ENCODE measurements at regions of chr21 and their contacts with region 1.

Region 1: GRCh38 chr21:15592271-15592860 is 137.4 kb upstream of the USP25 start:
- DNase-seq: no peak

Region 2: DNA sequence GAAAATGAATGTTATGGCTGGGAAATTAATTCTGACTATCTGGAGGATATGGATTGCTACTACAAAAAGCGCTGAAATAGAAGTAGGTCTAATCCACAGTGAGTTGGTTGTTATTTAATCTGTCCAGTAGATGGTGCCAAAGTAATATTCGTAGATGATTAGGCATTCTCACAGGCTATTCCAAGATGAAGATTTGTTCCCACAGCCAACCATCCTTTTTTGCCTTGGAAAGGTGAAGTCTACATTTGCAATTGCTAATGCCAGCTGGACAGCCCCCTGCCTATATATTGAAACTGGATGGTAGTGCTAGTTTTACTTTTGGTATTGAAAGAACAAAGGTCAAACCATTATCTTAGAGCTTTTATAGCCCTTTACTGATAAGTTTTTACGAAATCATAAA is 1332.6 kb before region 1 on chr21:
- intact Hi-C with region 1: loop called (anchors 5 kb)
- DNase-seq: no peak

Region 3: DNA sequence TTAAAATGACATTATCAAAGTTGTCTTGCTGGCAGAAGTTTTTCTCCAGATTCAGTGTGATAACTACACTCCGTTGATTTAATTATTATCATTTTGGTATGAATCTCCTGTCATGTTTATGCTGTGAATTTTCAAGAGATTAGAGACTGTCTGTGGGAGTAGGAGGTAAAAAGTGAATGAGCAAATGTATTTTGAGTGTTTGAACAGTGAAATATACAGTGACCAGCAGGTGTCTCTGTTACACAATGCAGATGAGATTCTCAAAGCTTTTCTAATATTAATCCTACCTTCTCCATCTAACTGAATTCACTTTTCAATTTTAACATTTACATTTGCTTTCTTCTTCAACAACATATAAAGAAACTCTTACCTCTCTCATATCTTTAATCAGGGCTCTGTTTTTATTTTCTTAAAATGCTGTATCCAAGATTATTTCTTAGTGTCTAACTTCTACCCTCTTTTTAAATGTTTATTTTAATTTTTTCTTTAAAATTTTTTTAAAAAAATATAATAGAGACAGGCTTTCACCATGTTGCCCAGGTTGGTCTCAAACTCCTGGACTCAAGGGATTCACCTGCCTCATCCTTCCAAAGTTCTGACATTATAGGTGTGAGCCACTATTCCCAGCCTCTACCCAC is 1188.6 kb before region 1 on chr21:
- intact Hi-C with region 1: loop called (anchors 10 kb)
- DNase-seq: no peak

Region 4: GRCh38 chr21:14864211-14865021 is 728.0 kb before region 1 on chr21:
- intact Hi-C with region 1: loop called (anchors 5 kb)
- DNase-seq: peak; percentile 64 to 96 (median 78)

Region 5: DNA sequence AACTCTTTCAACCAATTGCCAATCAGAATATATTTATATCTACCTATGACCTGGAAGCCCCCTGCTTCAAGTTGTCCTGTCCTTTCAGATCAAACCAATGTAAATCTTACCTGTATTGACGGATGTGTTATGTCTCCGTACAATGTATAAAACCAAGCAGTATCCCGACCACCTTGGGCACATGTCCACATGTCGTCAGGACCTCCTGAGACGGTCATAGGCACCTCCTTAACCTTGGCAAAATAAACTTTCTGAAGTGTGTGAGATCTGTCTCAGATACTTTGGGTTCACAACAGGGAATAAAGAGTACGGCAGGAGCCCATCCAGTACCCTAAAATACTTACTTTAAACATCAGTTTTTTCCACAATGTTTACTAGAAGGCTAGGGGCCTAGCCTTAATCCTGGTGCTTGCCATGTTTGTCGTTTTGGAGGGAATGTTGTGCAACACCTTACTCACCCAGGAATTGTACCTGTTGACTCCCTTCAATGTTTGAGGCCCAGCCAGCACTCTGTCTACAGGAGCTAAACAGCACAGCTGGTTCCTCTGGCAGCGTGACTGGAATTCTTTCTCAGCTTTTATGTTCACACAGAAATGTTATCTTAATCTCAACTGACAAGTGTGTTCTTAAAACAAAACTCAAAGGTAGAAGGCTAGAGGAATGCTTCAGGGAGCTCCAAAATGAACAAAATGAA is 46.6 kb after region 1 on chr21:
- intact Hi-C with region 1: no loop called
- DNase-seq: peak in 3 of 10 donors; percentile 9 to 52 (median 36)